ENCODE measurements at regions of chr1 and their contacts with region 1.

Region 1: DNA sequence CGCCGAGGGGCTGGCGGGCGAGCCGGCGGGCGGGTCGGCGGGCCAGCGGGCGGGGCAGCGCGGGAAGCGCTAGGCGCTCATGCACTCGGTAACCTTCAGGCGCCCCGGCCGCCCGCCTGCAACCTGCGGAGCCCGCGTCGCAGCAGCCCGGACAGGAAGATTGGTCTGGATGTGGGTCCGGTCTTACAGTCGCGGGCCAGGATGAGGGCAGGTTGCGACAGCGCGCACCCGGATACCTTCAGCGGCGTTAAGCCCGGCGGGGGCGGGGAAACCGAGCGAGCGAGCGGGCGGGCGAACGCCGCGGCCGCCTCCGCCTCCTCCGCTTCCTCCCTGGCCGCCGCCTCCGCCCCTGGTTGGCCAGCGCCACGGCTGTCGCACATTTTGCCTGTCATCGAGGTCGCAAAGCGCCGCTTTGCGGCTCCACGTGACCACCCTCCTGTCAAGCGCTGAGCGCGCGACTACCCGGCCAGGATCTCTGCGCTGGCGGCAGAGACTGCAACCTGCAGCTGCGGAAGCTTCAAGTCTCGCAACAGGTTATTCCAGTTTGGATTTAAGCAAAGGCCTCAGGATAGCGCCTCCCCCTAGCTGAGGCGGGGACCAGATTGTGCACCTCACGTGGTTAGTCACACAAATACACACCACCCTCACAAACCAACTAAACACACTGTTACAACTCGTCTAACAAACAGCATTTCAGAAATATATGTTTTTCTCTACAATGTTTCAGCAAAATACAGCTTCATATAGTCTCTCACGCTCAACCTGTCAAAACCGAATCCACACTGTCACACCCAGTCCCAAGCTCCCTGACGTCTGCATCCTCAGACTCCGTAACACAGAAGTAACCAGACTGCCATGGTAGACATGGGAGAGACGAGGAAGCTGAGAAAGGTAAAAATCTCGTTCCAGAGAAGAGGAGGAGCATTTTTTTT is at the start of gene FAF1:
- DNase-seq: peak; percentile 98
- ATAC-seq: peak; percentile 99
- total RNA-seq, gene FAF1: 88.1 TPM

Region 2: GRCh38 chr1:50774759-50775351 is 185.3 kb before region 1 on chr1:
- intact Hi-C with region 1: loop called (anchors 10 kb)
- DNase-seq: no peak
- ATAC-seq: peak; percentile 61